A549 (cell line): ENCODE measurements at regions of chr20 and their contacts with region 1.

Region 1: GRCh38 chr20:53828682-53829254 is 235.1 kb upstream of the ZNF217 start:
- DNase-seq: peak; percentile 60 to 84
- ATAC-seq: peak; percentile 83 to 84
- H3K4me3 ChIP-seq: peak overlapping the region; percentile 28
- H3K27ac ChIP-seq: peak overlapping the region; percentile 93 to 97
- H3K4me1 ChIP-seq: peaks cover 63% of the 10 kb centered on the region
- CTCF ChIP-seq: peak; percentile 35
- EP300 ChIP-seq: no peak
- POLR2A ChIP-seq: no peak
- RAD21 ChIP-seq: peak; percentile 46 to 48; a peak in 3 of 5 replicates

Region 2: GRCh38 chr20:53738039-53738944 is 90.5 kb before region 1 on chr20:
- CTCF ChIA-PET with region 1: interaction called, 6 read pairs
- POLR2A ChIA-PET with region 1: interaction called, 11 read pairs
- DNase-seq: peak; percentile 67 to 95
- ATAC-seq: peak; percentile 90 to 91
- H3K4me3 ChIP-seq: peak overlapping the region; percentile 27; the same call in 2 of the 3 replicates
- H3K27ac ChIP-seq: peak overlapping the region; percentile 89 to 90
- H3K4me1 ChIP-seq: peaks cover 72% of the 10 kb centered on the region
- CTCF ChIP-seq: no peak
- EP300 ChIP-seq: no peak
- POLR2A ChIP-seq: peak; percentile 41
- RAD21 ChIP-seq: peak; percentile 13 to 37; a peak in 3 of 5 replicates

Region 3: GRCh38 chr20:53750827-53751619 is 77.7 kb before region 1 on chr20:
- CTCF ChIA-PET with region 1: interaction called, 3 read pairs
- POLR2A ChIA-PET with region 1: interaction called, 19 read pairs
- DNase-seq: no peak
- ATAC-seq: peak in 1 of 2 experiments; percentile 12; a peak in 1 of 6 replicates
- H3K4me3 ChIP-seq: no peak overlapping the region
- H3K27ac ChIP-seq: peak overlapping the region; percentile 86
- H3K4me1 ChIP-seq: peaks cover 53% of the 10 kb centered on the region
- CTCF ChIP-seq: no peak
- EP300 ChIP-seq: no peak
- POLR2A ChIP-seq: no peak
- RAD21 ChIP-seq: no peak

Region 4: GRCh38 chr20:53773792-53774401 is 54.9 kb before region 1 on chr20:
- CTCF ChIA-PET with region 1: interaction called, 4 read pairs
- POLR2A ChIA-PET with region 1: interaction called, 27 read pairs
- DNase-seq: peak; percentile 91 to 94
- ATAC-seq: peak; percentile 87 to 95
- H3K4me3 ChIP-seq: no peak overlapping the region
- H3K27ac ChIP-seq: peak overlapping the region; percentile 92
- H3K4me1 ChIP-seq: peaks cover 52% of the 10 kb centered on the region
- CTCF ChIP-seq: no peak
- EP300 ChIP-seq: peak; percentile 71 to 81; a peak in 4 of 5 replicates
- POLR2A ChIP-seq: no peak
- RAD21 ChIP-seq: peak; percentile 31 to 54; a peak in 3 of 5 replicates

Region 5: GRCh38 chr20:53869466-53870258 is 40.9 kb after region 1 on chr20:
- CTCF ChIA-PET with region 1: interaction called, 4 read pairs
- POLR2A ChIA-PET with region 1: interaction called, 13 read pairs
- DNase-seq: peak; percentile 83 to 93
- ATAC-seq: peak; percentile 88 to 89
- H3K4me3 ChIP-seq: no peak overlapping the region
- H3K27ac ChIP-seq: peak overlapping the region; percentile 82 to 93
- H3K4me1 ChIP-seq: peaks cover 72% of the 10 kb centered on the region
- CTCF ChIP-seq: peak; percentile 87
- EP300 ChIP-seq: no peak; a peak in 1 of 5 replicates
- POLR2A ChIP-seq: no peak
- RAD21 ChIP-seq: peak; percentile 91

Region 6: GRCh38 chr20:53899351-53900167 is 70.8 kb after region 1 on chr20:
- CTCF ChIA-PET with region 1: no interaction called
- POLR2A ChIA-PET with region 1: interaction called, 10 read pairs
- DNase-seq: peak; percentile 60 to 80
- ATAC-seq: peak; percentile 87 to 89
- H3K4me3 ChIP-seq: no peak overlapping the region
- H3K27ac ChIP-seq: peak overlapping the region; percentile 70 to 91
- H3K4me1 ChIP-seq: peaks cover 42% of the 10 kb centered on the region
- CTCF ChIP-seq: no peak
- EP300 ChIP-seq: no peak
- POLR2A ChIP-seq: no peak
- RAD21 ChIP-seq: no peak

Region 7: GRCh38 chr20:54017809-54018208 is 189.0 kb after region 1 on chr20:
- CTCF ChIA-PET with region 1: no interaction called
- POLR2A ChIA-PET with region 1: no interaction called
- DNase-seq: no peak
- ATAC-seq: no peak
- H3K4me3 ChIP-seq: no peak overlapping the region
- H3K27ac ChIP-seq: no peak overlapping the region
- H3K4me1 ChIP-seq: no peaks in the 10 kb centered on the region
- CTCF ChIP-seq: no peak
- EP300 ChIP-seq: no peak
- POLR2A ChIP-seq: no peak
- RAD21 ChIP-seq: no peak